GM12878 (cell line): ENCODE measurements at regions of chr2 and their contacts with region 1.

Region 1: DNA sequence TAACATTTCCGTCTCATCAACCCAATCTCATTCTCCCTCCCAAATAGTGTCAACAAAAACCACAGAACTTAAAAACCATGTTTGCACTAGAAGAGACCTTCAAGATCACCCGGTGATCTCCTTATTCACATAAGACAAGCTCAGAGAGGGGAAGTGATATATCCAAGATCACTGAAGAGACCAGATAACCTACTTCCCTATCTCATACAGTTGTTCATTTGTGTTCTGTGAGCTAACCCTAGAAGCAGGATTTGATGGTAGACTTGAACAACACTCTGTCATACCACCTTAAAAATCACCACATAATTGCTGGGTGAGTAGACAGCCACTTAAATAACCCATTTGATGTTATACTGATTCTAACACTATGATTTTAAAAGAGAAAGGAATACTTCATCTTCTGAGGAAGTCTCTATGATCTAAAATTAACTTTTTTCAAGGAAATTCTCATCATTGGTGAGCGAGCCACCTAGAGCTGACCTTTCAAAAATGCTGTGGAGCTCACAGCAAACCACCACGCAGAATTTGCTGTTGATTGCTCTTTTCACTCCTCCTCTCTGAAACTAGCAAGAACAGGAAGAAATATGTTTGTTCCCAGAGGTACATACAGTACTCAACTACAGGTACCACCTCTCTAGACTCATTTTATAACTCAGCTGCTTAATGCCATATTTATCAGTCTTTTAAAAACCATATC is 15.1 kb downstream of the AAK1 start:
- DNase-seq: no peak
- ATAC-seq: peak; percentile 62
- H3K4me3 ChIP-seq: no peak overlapping the region
- H3K27ac ChIP-seq: no peak overlapping the region
- H3K4me1 ChIP-seq: peaks cover 11% of the 10 kb centered on the region
- H3K27me3 ChIP-seq: no peaks in the 10 kb centered on the region
- CTCF ChIP-seq: no peak
- EP300 ChIP-seq: no peak
- POLR2A ChIP-seq: no peak
- RAD21 ChIP-seq: no peak

Region 2: DNA sequence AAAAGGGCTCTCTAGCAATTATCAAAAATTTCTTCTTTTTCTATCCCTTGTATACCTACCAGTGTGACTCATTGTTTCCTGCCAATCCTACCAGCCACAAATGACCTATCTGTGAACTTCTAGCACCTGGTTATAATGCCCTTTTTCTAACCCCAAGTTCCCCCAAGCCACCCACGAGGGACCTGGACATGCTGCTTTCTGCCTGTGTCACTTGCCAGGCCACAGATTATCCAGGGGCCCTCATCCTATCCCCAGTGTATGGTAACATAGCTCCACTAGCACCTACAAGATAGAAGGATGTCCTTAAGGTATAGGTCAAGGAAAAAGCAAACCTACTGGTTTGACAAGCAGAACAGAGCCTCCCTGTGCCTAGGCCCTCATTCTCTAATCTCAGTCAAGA is 11.7 kb before region 1 on chr2:
- CTCF ChIA-PET with region 1: no interaction called
- POLR2A ChIA-PET with region 1: interaction called, 3 read pairs
- RAD21 ChIA-PET with region 1: interaction called, 3 read pairs
- SMC1A ChIA-PET with region 1: interaction called, 10 read pairs
- in situ Hi-C with region 1: no loop called
- intact Hi-C with region 1: no loop called
- DNase-seq: no peak
- ATAC-seq: peak; percentile 76
- H3K4me3 ChIP-seq: no peak overlapping the region; the same call in 1 of the 2 replicates
- H3K27ac ChIP-seq: peak overlapping the region; percentile 1; the same call in 1 of the 2 replicates
- H3K4me1 ChIP-seq: peaks cover 34% of the 10 kb centered on the region
- H3K27me3 ChIP-seq: no peaks in the 10 kb centered on the region
- CTCF ChIP-seq: no peak
- EP300 ChIP-seq: no peak
- POLR2A ChIP-seq: no peak
- RAD21 ChIP-seq: no peak

Region 3: GRCh38 chr2:70301344-70302194 is 673.1 kb after region 1 on chr2 and contains the start of gene FAM136A:
- CTCF ChIA-PET with region 1: no interaction called
- POLR2A ChIA-PET with region 1: no interaction called
- RAD21 ChIA-PET with region 1: no interaction called
- SMC1A ChIA-PET with region 1: no interaction called
- in situ Hi-C with region 1: no loop called
- intact Hi-C with region 1: no loop called
- DNase-seq: peak; percentile 40
- ATAC-seq: peak; percentile 93
- H3K4me3 ChIP-seq: peak within 1 kb of the TSS; percentile 84
- H3K27ac ChIP-seq: peak within 1 kb of the TSS; percentile 85
- H3K4me1 ChIP-seq: peaks cover 3% of the 10 kb centered on the region; the same call in 1 of the 2 replicates
- H3K27me3 ChIP-seq: no peaks in the 10 kb centered on the region
- CTCF ChIP-seq: peak; percentile 88 to 97 (median 95)
- EP300 ChIP-seq: no peak
- POLR2A ChIP-seq: peak; percentile 82
- RAD21 ChIP-seq: peak; percentile 70
- polyA plus RNA-seq, gene FAM136A: 128 to 134 TPM